HCT116 (cell line): ENCODE measurements at regions of chr10 and their contacts with region 1.

Region 1: GRCh38 chr10:79195091-79195923 is 126.5 kb downstream of the ZMIZ1 start:
- DNase-seq: peak; percentile 52
- ATAC-seq: peak; percentile 90
- H3K4me3 ChIP-seq: no peak overlapping the region
- H3K27ac ChIP-seq: peak overlapping the region; percentile 15; the same call in 1 of the 2 replicates
- H3K4me1 ChIP-seq: peaks cover 18 to 49% of the 10 kb centered on the region in 2 experiments
- H3K27me3 ChIP-seq: no peaks in the 10 kb centered on the region
- CTCF ChIP-seq: peak; percentile 79 to 97 (median 93)
- POLR2A ChIP-seq: no peak
- RAD21 ChIP-seq: peak; percentile 98

Region 2: DNA sequence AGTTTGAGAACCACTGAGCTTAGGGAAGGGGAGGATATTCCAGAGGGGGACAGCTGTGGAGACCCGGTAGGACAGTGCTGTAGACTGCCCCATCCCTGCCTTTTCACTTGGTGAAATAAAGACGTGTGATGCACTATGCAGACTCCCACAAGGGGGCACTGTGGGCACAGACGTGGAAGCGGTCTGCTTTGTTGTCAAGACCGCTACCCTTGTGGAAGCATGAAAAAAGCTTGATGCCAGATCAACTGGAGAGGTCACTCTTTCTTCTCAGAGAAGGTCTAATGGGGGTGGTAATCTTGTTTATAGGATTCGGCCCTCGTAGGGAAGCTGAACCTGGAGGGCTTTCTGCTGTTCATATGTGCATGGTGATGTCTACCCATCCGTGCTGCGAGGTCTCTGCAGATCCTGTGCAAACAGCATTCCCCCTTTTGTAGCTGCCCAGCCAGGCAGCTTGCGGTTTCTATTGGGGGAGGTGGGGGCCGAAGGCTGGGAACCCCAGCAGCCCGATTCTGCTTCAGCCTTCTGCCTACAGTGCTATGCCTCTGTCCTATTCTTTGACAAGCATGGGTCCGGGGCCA is 1147.9 kb before region 1 on chr10:
- CTCF ChIA-PET with region 1: interaction called, 8 read pairs
- POLR2A ChIA-PET with region 1: no interaction called
- RAD21 ChIA-PET with region 1: no interaction called
- intact Hi-C with region 1: loop called (anchors 2 kb)
- DNase-seq: peak; percentile 64
- ATAC-seq: peak; percentile 73
- H3K4me3 ChIP-seq: no peak overlapping the region
- H3K27ac ChIP-seq: no peak overlapping the region
- H3K4me1 ChIP-seq: peaks cover 0 to 21% of the 10 kb centered on the region in 2 experiments; a peak in 2 of 4 replicates
- H3K27me3 ChIP-seq: no peaks in the 10 kb centered on the region
- CTCF ChIP-seq: peak; percentile 73 to 94 (median 87); a peak in 5 of 6 replicates
- POLR2A ChIP-seq: no peak
- RAD21 ChIP-seq: peak; percentile 89

Region 3: DNA sequence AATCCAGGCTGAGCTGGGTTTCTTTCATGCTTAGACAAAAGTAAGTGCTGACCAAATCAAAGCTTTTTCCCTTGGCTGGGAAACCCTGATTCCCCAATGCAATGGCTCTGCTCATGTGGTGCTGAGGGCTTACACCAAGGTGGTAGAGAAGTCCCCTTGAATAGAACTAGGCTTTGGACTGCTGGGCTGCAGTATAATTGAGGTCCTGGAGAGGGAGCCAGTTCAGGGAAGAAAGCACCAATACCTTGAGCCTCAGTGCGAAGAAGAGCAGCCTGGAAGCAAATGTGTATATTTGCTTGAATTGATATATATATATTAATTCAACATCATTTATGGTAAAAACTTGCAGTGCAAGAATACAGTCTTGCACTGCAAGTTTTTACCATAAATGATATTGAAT is 770.6 kb before region 1 on chr10:
- CTCF ChIA-PET with region 1: no interaction called
- POLR2A ChIA-PET with region 1: no interaction called
- RAD21 ChIA-PET with region 1: interaction called in 1 of 2 experiments, 3 read pairs
- intact Hi-C with region 1: loop called (anchors 5 kb)
- DNase-seq: peak; percentile 41
- ATAC-seq: peak; percentile 96
- H3K4me3 ChIP-seq: no peak overlapping the region
- H3K27ac ChIP-seq: no peak overlapping the region
- H3K4me1 ChIP-seq: no peaks in the 10 kb centered on the region
- H3K27me3 ChIP-seq: peaks cover 32% of the 10 kb centered on the region
- CTCF ChIP-seq: peak; percentile 42 to 73 (median 50); a peak in 5 of 6 replicates
- POLR2A ChIP-seq: no peak
- RAD21 ChIP-seq: peak; percentile 60

Region 4: DNA sequence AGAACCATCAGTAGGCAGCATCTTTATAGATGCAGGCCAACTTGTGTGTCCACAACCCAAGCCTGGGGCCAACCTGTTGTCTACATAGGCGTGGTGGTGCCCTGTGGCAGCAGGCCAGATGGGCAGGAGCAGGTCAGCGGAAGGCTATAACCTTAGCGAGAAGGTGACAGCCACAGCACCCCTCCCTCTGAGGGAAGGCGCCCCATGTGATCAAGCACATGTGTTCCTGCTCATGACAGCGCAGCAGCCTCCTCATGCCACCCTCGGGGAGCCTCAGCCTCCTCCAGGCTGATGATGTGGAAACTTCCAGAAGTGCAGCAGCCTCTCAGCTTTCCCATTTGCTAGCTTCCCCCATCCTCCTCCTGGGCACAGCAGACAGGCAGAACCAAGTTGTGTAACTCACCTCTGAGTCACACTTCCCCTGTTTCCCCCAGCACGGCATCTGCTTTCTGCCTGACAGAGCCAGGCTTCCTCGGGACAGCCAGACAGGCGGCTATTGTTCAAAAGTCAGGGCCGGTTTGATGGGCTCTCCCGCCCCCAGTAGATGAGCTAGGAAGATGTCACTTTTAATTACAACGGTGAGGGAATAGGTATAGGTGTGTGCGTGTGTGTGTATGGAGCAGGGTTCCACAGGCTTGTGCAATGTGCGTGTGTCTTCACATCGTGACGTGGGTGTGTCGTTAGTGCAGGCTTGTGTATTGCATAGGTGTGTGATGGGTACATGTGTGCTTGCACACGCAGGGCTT is 438.5 kb before region 1 on chr10:
- CTCF ChIA-PET with region 1: no interaction called
- POLR2A ChIA-PET with region 1: no interaction called
- RAD21 ChIA-PET with region 1: no interaction called
- intact Hi-C with region 1: loop called (anchors 10 kb)
- DNase-seq: peak; percentile 64
- ATAC-seq: peak; percentile 89
- H3K4me3 ChIP-seq: no peak overlapping the region
- H3K27ac ChIP-seq: no peak overlapping the region
- H3K4me1 ChIP-seq: peaks cover 11 to 21% of the 10 kb centered on the region in 2 experiments; a peak in 3 of 4 replicates
- H3K27me3 ChIP-seq: peaks cover 15% of the 10 kb centered on the region; the same call in 1 of the 2 replicates
- CTCF ChIP-seq: no peak
- POLR2A ChIP-seq: no peak
- RAD21 ChIP-seq: peak; percentile 38

Region 5: GRCh38 chr10:78937800-78938694 is 257.3 kb before region 1 on chr10:
- CTCF ChIA-PET with region 1: no interaction called
- POLR2A ChIA-PET with region 1: no interaction called
- RAD21 ChIA-PET with region 1: no interaction called
- intact Hi-C with region 1: loop called (anchors 5 kb)
- DNase-seq: no peak
- ATAC-seq: peak; percentile 77
- H3K4me3 ChIP-seq: no peak overlapping the region
- H3K27ac ChIP-seq: no peak overlapping the region
- H3K4me1 ChIP-seq: peaks cover 0 to 26% of the 10 kb centered on the region in 2 experiments; a peak in 2 of 4 replicates
- H3K27me3 ChIP-seq: no peaks in the 10 kb centered on the region
- CTCF ChIP-seq: peak; percentile 52 to 70 (median 61); a peak in 5 of 6 replicates
- POLR2A ChIP-seq: no peak
- RAD21 ChIP-seq: peak; percentile 67

Region 6: DNA sequence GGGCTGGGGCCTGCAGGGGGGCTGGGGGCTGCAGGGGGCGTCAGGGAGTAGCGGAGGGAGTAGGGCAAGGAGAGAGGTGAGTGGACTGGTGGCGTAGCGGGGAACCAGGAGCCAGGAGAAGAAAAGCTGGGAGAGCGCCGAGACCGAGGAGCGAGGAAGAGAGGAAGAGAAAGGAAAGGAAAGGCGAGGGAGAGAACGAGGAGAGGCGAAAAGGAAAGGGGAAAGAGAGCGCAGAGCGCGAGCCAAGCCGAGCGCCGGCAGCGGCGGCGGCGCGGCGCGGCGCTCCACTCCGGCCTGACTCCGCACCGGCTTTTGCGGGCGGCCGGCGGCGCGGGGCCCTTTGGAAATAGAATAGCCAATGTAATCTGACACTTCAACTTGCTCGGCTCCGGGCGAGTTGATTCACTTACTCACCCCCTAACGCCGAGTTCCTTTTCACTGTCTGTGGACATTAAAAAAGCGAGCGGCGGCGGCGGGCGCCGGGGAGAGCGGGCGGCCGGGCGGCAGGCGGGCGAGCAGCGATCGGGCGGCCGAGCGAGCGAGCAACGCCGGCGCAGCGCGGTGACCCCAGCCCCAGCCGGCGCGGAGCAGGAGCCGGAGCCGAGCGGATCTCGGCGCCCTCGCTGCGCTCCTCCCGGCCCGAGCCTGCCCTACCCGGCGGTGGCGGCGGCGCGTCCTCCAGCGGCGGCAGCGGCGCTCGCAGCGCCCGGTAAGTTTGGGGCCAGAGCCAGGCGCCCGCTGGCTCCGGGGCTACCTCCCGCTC is 126.6 kb before region 1 on chr10 and contains the start of gene ZMIZ1:
- CTCF ChIA-PET with region 1: interaction called, 6 read pairs
- POLR2A ChIA-PET with region 1: no interaction called
- RAD21 ChIA-PET with region 1: interaction called, 4 to 5 read pairs
- intact Hi-C with region 1: loop called (anchors 1 kb)
- DNase-seq: peak; percentile 83
- ATAC-seq: peak; percentile 69
- H3K4me3 ChIP-seq: peak within 1 kb of the TSS; percentile 84 to 85
- H3K27ac ChIP-seq: peak within 1 kb of the TSS; percentile 97
- H3K4me1 ChIP-seq: peaks cover 32 to 58% of the 10 kb centered on the region in 2 experiments
- H3K27me3 ChIP-seq: no peaks in the 10 kb centered on the region
- CTCF ChIP-seq: 0 out of 6 replicates have a peak, but pooled peaks of 1 of the 3 experiments have one; percentile 11
- POLR2A ChIP-seq: peak; percentile 82
- RAD21 ChIP-seq: 0 out of 2 replicates have a peak, but pooled peaks have one; percentile 36
- total RNA-seq, gene ZMIZ1: 28.4 TPM